ENCODE measurements at regions of chr10 and their contacts with region 1.

Region 1: DNA sequence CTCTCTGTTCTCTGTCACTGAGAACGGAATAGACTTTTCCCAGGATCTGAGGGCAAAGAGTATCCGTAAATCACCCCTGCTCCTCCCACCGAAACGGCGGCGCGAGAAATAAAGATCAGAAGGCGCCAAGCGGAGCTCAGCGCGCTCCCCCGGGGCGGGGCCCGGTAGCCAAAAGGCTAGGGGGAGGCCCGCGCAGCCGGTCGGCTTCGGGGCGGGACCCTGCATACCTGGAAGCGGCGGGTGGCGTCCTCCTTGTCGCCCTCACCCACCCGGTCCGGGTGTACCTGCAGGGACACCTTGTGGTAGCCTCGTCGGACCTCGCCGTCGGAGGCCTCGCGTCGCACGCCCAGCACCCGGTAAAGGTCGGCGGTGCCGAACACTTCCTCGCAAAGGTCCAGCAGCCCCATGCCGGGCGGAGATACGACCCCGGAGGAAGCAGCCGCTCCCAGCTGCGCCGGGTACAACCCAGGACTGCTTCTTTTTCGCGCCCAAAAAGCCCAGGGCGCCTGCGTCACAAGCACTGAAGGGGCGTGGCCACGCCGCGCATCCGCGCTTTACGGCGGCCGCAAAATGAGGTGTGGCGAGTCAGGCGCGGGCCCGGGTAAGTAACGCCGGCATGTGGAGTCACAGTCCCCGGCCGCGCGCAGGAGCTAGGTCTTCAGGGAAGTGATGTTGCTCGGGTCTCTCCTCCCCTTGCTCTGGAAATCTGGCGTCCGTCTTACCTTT is at the start of gene DNAJC9:
- DNase-seq: peak; percentile 96
- H3K4me3 Mint-ChIP-seq: peak within 1 kb of the TSS; percentile 91
- H3K27ac Mint-ChIP-seq: peak within 1 kb of the TSS; percentile 95
- H3K4me1 Mint-ChIP-seq: peaks cover 30% of the 10 kb centered on the region
- H3K27me3 Mint-ChIP-seq: no peaks in the 10 kb centered on the region
- CTCF ChIP-seq: peak; percentile 6
- total RNA-seq, gene DNAJC9: 33.1 and 35.1 TPM in 2 replicates

Region 2: DNA sequence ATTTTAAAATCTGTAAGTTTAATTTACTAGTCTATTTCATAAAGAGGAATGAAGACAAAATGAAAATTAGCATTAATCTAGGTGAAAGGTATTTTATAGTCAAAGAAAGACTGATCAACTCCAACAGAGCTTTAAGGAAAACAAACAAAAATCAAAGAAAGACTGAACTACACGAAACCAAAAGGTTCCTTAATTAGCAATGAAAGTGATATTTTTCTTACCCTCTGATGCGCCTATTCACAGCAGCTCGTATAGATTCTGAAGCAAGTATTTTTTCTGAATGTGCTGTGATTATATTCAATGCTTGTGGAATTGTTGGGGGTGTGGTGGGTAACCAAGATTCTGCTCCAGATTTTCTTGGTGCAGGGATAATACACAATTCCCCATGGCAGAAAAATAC is 90.9 kb before region 1 on chr10:
- CTCF ChIA-PET with region 1: no interaction called
- POLR2A ChIA-PET with region 1: no interaction called
- intact Hi-C with region 1: no loop called
- DNase-seq: no peak
- H3K4me3 Mint-ChIP-seq: no peak overlapping the region
- H3K27ac Mint-ChIP-seq: no peak overlapping the region
- H3K4me1 Mint-ChIP-seq: peaks cover 8% of the 10 kb centered on the region
- H3K27me3 Mint-ChIP-seq: no peaks in the 10 kb centered on the region
- CTCF ChIP-seq: no peak

Region 3: GRCh38 chr10:73167783-73168464 is 79.0 kb before region 1 on chr10 and contains the starts of genes ECD and FAM149B1:
- CTCF ChIA-PET with region 1: no interaction called
- POLR2A ChIA-PET with region 1: interaction called, 36 read pairs
- intact Hi-C with region 1: no loop called
- DNase-seq: peak; percentile 93
- H3K4me3 Mint-ChIP-seq: peak within 1 kb of the TSS; percentile 92
- H3K27ac Mint-ChIP-seq: peak within 1 kb of the TSS; percentile 99
- H3K4me1 Mint-ChIP-seq: peaks cover 20% of the 10 kb centered on the region
- H3K27me3 Mint-ChIP-seq: no peaks in the 10 kb centered on the region
- CTCF ChIP-seq: no peak
- total RNA-seq, gene ECD: 29.9 and 31.5 TPM in 2 replicates
- total RNA-seq, gene FAM149B1: 22.8 and 27.7 TPM in 2 replicates

Region 4: GRCh38 chr10:73232887-73233286 is 14.1 kb before region 1 on chr10:
- CTCF ChIA-PET with region 1: no interaction called
- POLR2A ChIA-PET with region 1: interaction called, 14 read pairs
- intact Hi-C with region 1: no loop called
- DNase-seq: peak; percentile 6
- H3K4me3 Mint-ChIP-seq: no peak overlapping the region
- H3K27ac Mint-ChIP-seq: no peak overlapping the region
- H3K4me1 Mint-ChIP-seq: no peaks in the 10 kb centered on the region
- H3K27me3 Mint-ChIP-seq: no peaks in the 10 kb centered on the region
- CTCF ChIP-seq: no peak

Region 5: GRCh38 chr10:73358331-73359279 is 111.7 kb after region 1 on chr10 and contains the start of gene CFAP70:
- CTCF ChIA-PET with region 1: no interaction called
- POLR2A ChIA-PET with region 1: interaction called, 21 read pairs
- intact Hi-C with region 1: no loop called
- DNase-seq: peak; percentile 88
- H3K4me3 Mint-ChIP-seq: peak within 1 kb of the TSS; percentile 96
- H3K27ac Mint-ChIP-seq: peak within 1 kb of the TSS; percentile 98
- H3K4me1 Mint-ChIP-seq: peaks cover 11% of the 10 kb centered on the region
- H3K27me3 Mint-ChIP-seq: no peaks in the 10 kb centered on the region
- CTCF ChIP-seq: no peak
- total RNA-seq, gene CFAP70: 1.5 and 2.9 TPM in 2 replicates

Region 6: GRCh38 chr10:73495884-73496674 is 249.1 kb after region 1 on chr10 and contains the start of gene PPP3CB:
- CTCF ChIA-PET with region 1: interaction called, 5 read pairs
- POLR2A ChIA-PET with region 1: interaction called, 24 read pairs
- intact Hi-C with region 1: no loop called
- DNase-seq: peak; percentile 95
- H3K4me3 Mint-ChIP-seq: peak within 1 kb of the TSS; percentile 86
- H3K27ac Mint-ChIP-seq: peak within 1 kb of the TSS; percentile 74
- H3K4me1 Mint-ChIP-seq: peaks cover 28% of the 10 kb centered on the region
- H3K27me3 Mint-ChIP-seq: no peaks in the 10 kb centered on the region
- CTCF ChIP-seq: no peak
- total RNA-seq, gene PPP3CB: 34.8 and 37.4 TPM in 2 replicates